CD8-positive, alpha-beta T cell (primary cell): ENCODE measurements at regions of chr7 and their contacts with region 1.

Region 1: DNA sequence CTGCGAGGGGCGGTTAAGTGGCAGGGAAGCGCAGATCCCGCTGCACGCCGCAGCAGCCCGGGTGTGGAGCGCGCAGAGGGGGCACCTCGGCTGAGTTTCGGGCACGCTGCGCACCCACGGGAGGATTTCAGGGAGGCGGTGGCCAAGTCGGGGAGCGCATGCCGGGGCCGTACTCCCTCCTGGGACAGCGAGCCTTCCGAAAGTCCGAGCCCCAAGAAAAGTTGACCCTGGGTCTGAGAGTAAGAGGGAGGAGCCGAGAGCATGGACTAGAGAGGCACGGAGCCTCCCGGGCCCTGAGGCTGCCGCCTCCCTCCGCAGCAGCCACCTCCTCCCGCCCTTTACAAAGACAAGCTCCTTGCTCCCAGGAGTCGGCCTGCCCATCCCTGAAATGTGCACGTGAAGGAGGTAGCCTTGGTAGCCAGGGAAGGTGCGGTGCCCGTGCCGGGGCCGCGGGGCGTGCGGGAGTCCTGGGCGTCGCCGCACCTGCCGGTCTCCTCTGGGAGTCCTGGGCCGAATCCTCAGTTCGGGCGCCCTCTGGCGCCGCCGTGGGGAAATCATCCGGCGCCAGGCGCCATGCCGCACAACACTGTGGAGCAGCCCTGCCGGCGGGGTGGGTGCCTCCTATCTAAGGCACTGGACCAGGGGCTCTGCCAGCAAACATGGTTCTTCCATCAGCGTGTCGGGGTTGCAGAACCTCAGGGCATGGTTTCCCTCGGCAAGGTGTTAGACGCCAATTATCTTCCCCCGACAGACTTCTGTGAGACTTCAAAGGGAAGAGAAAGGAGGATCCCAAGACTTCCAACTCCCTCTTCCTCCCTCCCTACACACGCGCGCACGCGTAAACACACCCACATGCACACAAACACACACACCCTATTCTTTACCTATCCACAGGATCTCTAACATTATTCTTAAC is 104.0 kb downstream of the TRIL start:
- DNase-seq: peak; percentile 39 to 83 (median 59)
- ATAC-seq: peak; percentile 72
- H3K4me3 ChIP-seq: peak overlapping the region; percentile 45 to 62
- H3K4me3 Mint-ChIP-seq: peak overlapping the region; percentile 78
- H3K27ac ChIP-seq: no peak overlapping the region
- H3K27ac Mint-ChIP-seq: no peak overlapping the region
- H3K4me1 ChIP-seq: peaks cover 7% of the 10 kb centered on the region
- H3K4me1 Mint-ChIP-seq: peaks cover 9% of the 10 kb centered on the region
- H3K27me3 ChIP-seq: peaks cover 12% of the 10 kb centered on the region in 2 experiments
- H3K27me3 Mint-ChIP-seq: peaks cover 47% of the 10 kb centered on the region
- CTCF ChIP-seq: peak; percentile 65

Region 2: GRCh38 chr7:28389504-28390395 is 464.3 kb before region 1 on chr7:
- CTCF ChIA-PET with region 1: interaction called, 4 read pairs
- POLR2A ChIA-PET with region 1: no interaction called
- intact Hi-C with region 1: loop called (anchors 1 kb)
- DNase-seq: peak in 2 of 9 experiments; percentile 41 to 60
- ATAC-seq: no peak
- H3K4me3 ChIP-seq: no peak overlapping the region
- H3K4me3 Mint-ChIP-seq: no peak overlapping the region
- H3K27ac ChIP-seq: no peak overlapping the region
- H3K27ac Mint-ChIP-seq: no peak overlapping the region
- H3K4me1 ChIP-seq: no peaks in the 10 kb centered on the region
- H3K4me1 Mint-ChIP-seq: peaks cover 2% of the 10 kb centered on the region
- H3K27me3 ChIP-seq: peaks cover 0 to 3% of the 10 kb centered on the region in 2 experiments
- H3K27me3 Mint-ChIP-seq: peaks cover 20% of the 10 kb centered on the region
- CTCF ChIP-seq: peak; percentile 80

Region 3: GRCh38 chr7:28615091-28615490 is 239.0 kb before region 1 on chr7:
- CTCF ChIA-PET with region 1: interaction called, 6 read pairs
- POLR2A ChIA-PET with region 1: no interaction called
- intact Hi-C with region 1: loop called in 1 of 2 experiments (anchors 2 kb)
- DNase-seq: peak in 3 of 9 experiments; percentile 6 to 51 (median 24)
- ATAC-seq: no peak
- H3K4me3 ChIP-seq: no peak overlapping the region
- H3K4me3 Mint-ChIP-seq: no peak overlapping the region
- H3K27ac ChIP-seq: no peak overlapping the region
- H3K27ac Mint-ChIP-seq: no peak overlapping the region
- H3K4me1 ChIP-seq: no peaks in the 10 kb centered on the region
- H3K4me1 Mint-ChIP-seq: no peaks in the 10 kb centered on the region
- H3K27me3 ChIP-seq: no peaks in the 10 kb centered on the region
- H3K27me3 Mint-ChIP-seq: no peaks in the 10 kb centered on the region
- CTCF ChIP-seq: no peak